ENCODE measurements at regions of chr11 and their contacts with region 1.

Region 1: DNA sequence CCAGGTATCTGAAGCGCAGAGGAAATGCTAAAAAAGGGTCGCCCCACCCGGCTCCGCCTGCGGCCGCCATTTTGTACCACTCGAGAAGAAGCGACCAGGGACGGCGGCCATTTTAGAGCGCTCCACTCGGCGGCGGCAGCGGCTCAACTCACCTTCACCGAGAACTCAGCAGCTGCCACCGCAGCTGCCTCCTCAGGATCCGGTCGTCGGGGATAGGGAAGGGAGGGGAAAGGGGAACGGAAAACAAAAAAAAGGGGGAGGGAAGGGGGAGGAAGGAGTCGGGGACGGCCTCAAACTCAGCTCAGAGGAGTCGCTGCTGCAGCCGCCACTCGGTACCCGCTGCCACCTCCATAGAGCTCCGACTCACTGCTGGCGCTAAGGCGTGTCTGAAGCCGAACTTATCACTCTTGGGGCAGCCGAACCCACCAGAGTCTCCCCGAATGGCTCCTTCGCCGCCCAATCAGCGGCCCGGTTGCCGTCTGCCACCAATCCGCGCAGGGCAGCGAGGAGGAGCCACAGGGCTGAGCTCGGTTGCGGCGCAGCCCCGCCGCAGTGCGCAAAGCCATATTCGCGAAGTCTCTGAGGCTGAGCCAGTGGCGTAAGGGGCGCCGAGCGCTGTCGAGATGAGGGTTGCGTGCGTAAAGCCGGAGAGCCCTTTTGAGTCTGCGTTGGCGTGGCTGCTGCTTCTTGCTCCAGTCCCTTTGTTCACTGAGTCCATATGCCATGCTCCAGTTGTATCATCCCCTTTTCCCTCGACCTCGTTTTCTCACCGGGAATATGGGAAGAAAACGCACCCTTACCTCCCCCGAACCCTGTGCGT is at the start of gene EIF4G2:
- DNase-seq: peak; percentile 98 to 99
- ATAC-seq: peak; percentile 94 to 97 (median 96)
- H3K4me3 ChIP-seq: peak within 1 kb of the TSS; percentile 97
- H3K27ac ChIP-seq: peak within 1 kb of the TSS; percentile 99
- H3K4me1 ChIP-seq: peaks cover 38% of the 10 kb centered on the region
- H3K27me3 ChIP-seq: no peaks in the 10 kb centered on the region
- CTCF ChIP-seq: no peak
- total RNA-seq, gene EIF4G2: 652 to 809 (median 709) TPM

Region 2: GRCh38 chr11:10750838-10751580 is 57.8 kb before region 1 on chr11 and contains the start of gene CTR9:
- intact Hi-C with region 1: loop called in 1 of 2 experiments (anchors 5 kb)
- DNase-seq: peak; percentile 94 to 97
- ATAC-seq: peak; percentile 94 to 96 (median 95)
- H3K4me3 ChIP-seq: peak within 1 kb of the TSS; percentile 87
- H3K27ac ChIP-seq: peak within 1 kb of the TSS; percentile 94
- H3K4me1 ChIP-seq: peaks cover 11% of the 10 kb centered on the region
- H3K27me3 ChIP-seq: no peaks in the 10 kb centered on the region
- CTCF ChIP-seq: peak; percentile 20
- total RNA-seq, gene CTR9: 20.9 to 31.0 (median 26.1) TPM

Region 3: GRCh38 chr11:10770626-10771254 is 38.0 kb before region 1 on chr11:
- intact Hi-C with region 1: loop called in 1 of 2 experiments (anchors 5 kb)
- DNase-seq: peak; percentile 41 to 68
- ATAC-seq: peak; percentile 81 to 91 (median 86)
- H3K4me3 ChIP-seq: no peak overlapping the region
- H3K27ac ChIP-seq: peak overlapping the region; percentile 76
- H3K4me1 ChIP-seq: peaks cover 15% of the 10 kb centered on the region
- H3K27me3 ChIP-seq: no peaks in the 10 kb centered on the region
- CTCF ChIP-seq: peak; percentile 65

Region 4: GRCh38 chr11:10857709-10858438 is 49.1 kb after region 1 on chr11 and contains the start of gene ZBED5:
- intact Hi-C with region 1: loop called (anchors 1 to 5 kb)
- DNase-seq: peak; percentile 97 to 98
- ATAC-seq: peak; percentile 93 to 97 (median 96)
- H3K4me3 ChIP-seq: peak within 1 kb of the TSS; percentile 77
- H3K27ac ChIP-seq: peak within 1 kb of the TSS; percentile 92
- H3K4me1 ChIP-seq: peaks cover 43% of the 10 kb centered on the region
- H3K27me3 ChIP-seq: no peaks in the 10 kb centered on the region
- CTCF ChIP-seq: peak; percentile 26
- total RNA-seq, gene ZBED5: 25.5 to 47.8 (median 29.4) TPM

Region 5: DNA sequence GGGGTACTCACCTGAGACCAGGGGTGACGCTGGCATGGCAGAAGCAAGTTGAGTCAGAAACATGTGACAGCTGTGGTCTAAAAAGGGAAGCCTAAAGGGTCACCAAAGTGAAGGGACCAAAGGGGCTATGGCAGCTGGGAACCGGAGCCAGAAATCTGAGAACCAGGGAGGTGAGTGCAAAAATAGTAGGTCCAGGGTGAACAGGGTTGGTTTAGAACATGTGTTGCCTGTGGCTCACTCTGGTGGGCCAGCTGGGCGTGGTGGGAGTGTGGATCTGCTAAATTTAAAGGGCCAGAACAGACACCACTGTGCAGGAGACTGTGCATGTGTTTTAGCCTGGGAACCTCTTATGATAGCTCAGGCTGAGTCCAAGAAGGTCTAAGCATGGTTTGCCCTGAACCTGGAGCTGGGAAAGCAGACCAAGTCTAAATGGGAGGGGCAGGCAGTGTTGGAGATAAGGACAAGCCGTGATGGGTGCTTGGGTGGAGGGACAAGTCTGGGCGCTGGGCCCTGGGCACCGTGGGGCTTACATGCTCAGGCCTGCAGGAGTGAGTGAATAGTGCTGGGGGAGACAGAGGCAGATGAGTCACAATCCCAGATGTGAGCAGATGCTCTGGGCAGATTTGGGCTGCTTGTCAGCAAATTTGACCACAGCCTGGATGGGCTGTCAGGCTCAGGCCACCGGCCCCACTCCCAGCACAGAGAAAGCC is 90.5 kb after region 1 on chr11:
- intact Hi-C with region 1: loop called (anchors 2 to 5 kb)
- DNase-seq: peak; percentile 68 to 86
- ATAC-seq: peak; percentile 71 to 76 (median 75)
- H3K4me3 ChIP-seq: peak overlapping the region; percentile 67
- H3K27ac ChIP-seq: peak overlapping the region; percentile 91
- H3K4me1 ChIP-seq: peaks cover 38% of the 10 kb centered on the region
- H3K27me3 ChIP-seq: no peaks in the 10 kb centered on the region
- CTCF ChIP-seq: no peak

Region 6: GRCh38 chr11:10906513-10906912 is 97.8 kb after region 1 on chr11:
- intact Hi-C with region 1: loop called in 1 of 2 experiments (anchors 2 kb)
- DNase-seq: no peak
- ATAC-seq: peak; percentile 66 to 87 (median 84)
- H3K4me3 ChIP-seq: no peak overlapping the region
- H3K27ac ChIP-seq: peak overlapping the region; percentile 7
- H3K4me1 ChIP-seq: peaks cover 5% of the 10 kb centered on the region
- H3K27me3 ChIP-seq: no peaks in the 10 kb centered on the region
- CTCF ChIP-seq: peak; percentile 33